Activated CD4-positive, alpha-beta T cell treated with anti-CD3 and anti-CD28 coated beads, Interleukin-2, amount 10 ng/mL, durations not matched to agents 24 days and 14 days (primary cell): ENCODE measurements at regions of chr16 and their contacts with region 1.

Region 1: GRCh38 chr16:50665128-50665878 is 15.8 kb downstream of the SNX20 start:
- DNase-seq: peak; percentile 97
- H3K4me3 Mint-ChIP-seq: peak overlapping the region; percentile 71
- H3K27ac Mint-ChIP-seq: peak overlapping the region; percentile 53
- H3K4me1 Mint-ChIP-seq: peaks cover 42% of the 10 kb centered on the region
- H3K27me3 Mint-ChIP-seq: no peaks in the 10 kb centered on the region

Region 2: DNA sequence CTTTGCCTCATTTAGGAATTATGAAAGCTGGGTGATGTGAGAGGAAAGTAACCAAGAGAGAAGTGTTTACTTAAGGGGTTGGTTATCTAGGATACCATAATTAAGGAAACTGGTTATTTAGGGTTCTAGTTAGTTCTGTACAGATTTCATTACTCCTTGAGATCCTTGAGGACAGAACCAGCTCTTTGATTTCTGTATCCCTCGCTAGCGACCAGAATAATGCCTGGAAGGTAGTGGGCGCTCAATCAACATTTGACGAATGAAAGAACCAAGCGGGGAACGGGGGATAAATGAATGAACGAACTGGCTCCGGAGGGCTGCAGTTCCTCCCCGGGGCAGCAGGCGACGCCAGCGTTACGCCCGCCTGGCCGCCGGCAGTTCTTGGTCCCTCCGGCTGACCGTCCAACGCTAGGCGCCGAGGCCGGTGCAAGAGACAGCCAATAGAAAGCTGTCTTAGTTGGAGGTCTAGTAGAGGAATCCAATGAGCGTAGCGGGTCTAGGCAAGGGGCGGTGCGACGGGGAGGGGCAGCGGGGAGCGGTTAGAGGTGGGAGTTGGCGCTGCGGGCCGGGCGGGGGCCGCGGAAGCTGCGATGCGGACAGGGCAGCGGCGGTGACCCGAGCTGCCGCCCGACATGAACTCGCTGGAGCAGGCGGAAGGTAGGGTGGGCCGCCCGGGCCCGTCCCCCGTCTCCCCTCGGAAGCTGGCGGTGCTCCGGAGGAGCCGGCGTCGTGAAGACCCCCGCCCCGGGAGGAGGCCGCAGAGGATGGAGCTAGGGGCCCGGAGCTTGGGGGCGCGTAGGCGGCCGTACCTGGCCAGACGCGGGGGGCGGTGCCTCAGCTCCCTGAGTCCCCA is 640.4 kb before region 1 on chr16 and contains the start of gene CNEP1R1:
- intact Hi-C with region 1: loop called (anchors 5 kb)
- DNase-seq: peak; percentile 98
- H3K4me3 Mint-ChIP-seq: peak within 1 kb of the TSS; percentile 97
- H3K27ac Mint-ChIP-seq: peak within 1 kb of the TSS; percentile 88
- H3K4me1 Mint-ChIP-seq: peaks cover 17% of the 10 kb centered on the region
- H3K27me3 Mint-ChIP-seq: peaks cover 11% of the 10 kb centered on the region
- total RNA-seq, gene CNEP1R1: 22.3 and 23.0 TPM in 2 replicates

Region 3: GRCh38 chr16:50259334-50260205 is 405.7 kb before region 1 on chr16:
- intact Hi-C with region 1: loop called (anchors 5 kb)
- DNase-seq: no peak
- H3K4me3 Mint-ChIP-seq: no peak overlapping the region
- H3K27ac Mint-ChIP-seq: no peak overlapping the region
- H3K4me1 Mint-ChIP-seq: peaks cover 16% of the 10 kb centered on the region
- H3K27me3 Mint-ChIP-seq: peaks cover 28% of the 10 kb centered on the region

Region 4: GRCh38 chr16:50368410-50369132 is 296.7 kb before region 1 on chr16 and contains the start of gene BRD7:
- intact Hi-C with region 1: loop called (anchors 5 kb)
- DNase-seq: peak; percentile 89
- H3K4me3 Mint-ChIP-seq: peak within 1 kb of the TSS; percentile 92
- H3K27ac Mint-ChIP-seq: peak within 1 kb of the TSS; percentile 91
- H3K4me1 Mint-ChIP-seq: peaks cover 41% of the 10 kb centered on the region
- H3K27me3 Mint-ChIP-seq: peaks cover 3% of the 10 kb centered on the region
- total RNA-seq, gene BRD7: 92.7 and 98.8 TPM in 2 replicates

Region 5: DNA sequence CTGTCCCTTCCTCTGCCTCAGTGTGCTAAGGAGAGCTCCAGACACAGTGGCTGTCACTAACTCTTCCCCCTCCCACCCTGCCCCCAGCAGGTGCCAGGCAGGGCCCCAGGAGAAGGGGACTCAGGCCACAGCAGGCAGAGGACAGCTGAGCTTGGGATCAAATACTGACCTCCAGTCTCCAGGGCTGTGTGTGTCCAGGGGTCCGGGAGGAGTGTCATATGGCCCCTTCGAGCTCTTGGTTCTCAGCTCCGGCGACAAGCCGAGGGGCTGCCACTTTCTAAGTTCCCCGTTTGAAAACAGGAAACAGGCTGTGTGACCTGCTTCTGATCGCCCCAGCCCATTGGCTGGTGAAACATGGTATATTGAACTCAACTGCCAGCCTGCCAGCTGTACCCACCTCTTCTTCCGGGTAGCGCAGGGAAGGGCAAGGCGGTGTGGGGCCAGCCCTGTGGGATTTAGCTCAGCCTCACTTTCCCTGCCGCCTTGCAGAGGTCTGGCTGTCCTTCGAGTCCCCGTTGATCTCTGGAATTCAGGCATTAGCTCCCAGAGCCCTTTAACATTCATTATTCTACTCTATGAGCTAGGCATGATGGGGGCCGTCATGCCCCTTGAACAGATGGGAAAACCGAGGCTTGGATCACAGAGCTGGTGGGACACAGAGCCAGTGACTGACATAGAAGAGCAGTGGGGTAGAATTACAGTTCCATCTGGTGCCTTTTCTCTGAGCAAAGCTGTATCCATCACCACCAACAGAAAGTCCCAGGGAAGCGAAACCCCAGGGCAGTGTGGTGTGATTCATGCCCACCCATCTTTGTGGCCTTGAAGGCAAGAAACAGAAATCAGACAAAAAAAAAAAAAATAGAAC is 15.9 kb after region 1 on chr16 and contains the start of gene SNX20:
- intact Hi-C with region 1: loop called (anchors 2 kb)
- DNase-seq: peak; percentile 87
- H3K4me3 Mint-ChIP-seq: peak within 1 kb of the TSS; percentile 94
- H3K27ac Mint-ChIP-seq: peak within 1 kb of the TSS; percentile 91
- H3K4me1 Mint-ChIP-seq: peaks cover 80% of the 10 kb centered on the region
- H3K27me3 Mint-ChIP-seq: no peaks in the 10 kb centered on the region
- total RNA-seq, gene SNX20: 33.3 and 34.9 TPM in 2 replicates

Region 6: GRCh38 chr16:50709053-50709684 is 43.9 kb after region 1 on chr16:
- intact Hi-C with region 1: no loop called
- DNase-seq: no peak
- H3K4me3 Mint-ChIP-seq: peak overlapping the region; percentile 46
- H3K27ac Mint-ChIP-seq: peak overlapping the region; percentile 76
- H3K4me1 Mint-ChIP-seq: peaks cover 48% of the 10 kb centered on the region
- H3K27me3 Mint-ChIP-seq: no peaks in the 10 kb centered on the region

Region 7: DNA sequence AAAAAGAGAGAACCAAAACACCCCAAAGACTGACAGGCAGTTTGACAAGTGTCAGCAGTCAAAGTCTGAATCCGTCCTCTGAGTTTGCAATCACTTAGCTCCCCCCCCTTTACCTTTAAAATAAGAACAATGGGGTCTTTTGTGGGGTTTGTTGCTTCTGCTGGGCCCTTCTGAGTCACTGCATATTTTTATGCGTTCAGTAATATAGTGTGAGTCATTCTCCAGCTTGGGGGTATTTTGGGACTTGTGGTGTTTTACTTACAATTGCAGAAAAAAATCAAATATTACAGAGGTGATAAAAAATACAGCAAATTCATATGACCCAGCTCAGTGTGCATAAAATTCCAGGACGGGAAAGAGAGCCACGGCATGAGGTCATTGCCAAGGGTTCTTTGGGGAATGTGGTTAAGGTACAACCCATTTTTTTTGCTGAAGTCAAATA is 196.7 kb after region 1 on chr16:
- intact Hi-C with region 1: no loop called
- DNase-seq: peak; percentile 24
- H3K4me3 Mint-ChIP-seq: no peak overlapping the region
- H3K27ac Mint-ChIP-seq: no peak overlapping the region
- H3K4me1 Mint-ChIP-seq: no peaks in the 10 kb centered on the region
- H3K27me3 Mint-ChIP-seq: peaks cover 6% of the 10 kb centered on the region